ENCODE measurements at regions of chr11 and their contacts with region 1.

Region 1: GRCh38 chr11:31958076-31958735 is 132.7 kb upstream of the RCN1 start:
- H3K4me3 ChIP-seq: no peak overlapping the region
- H3K27ac ChIP-seq: no peak overlapping the region
- H3K4me1 ChIP-seq: no peaks in the 10 kb centered on the region
- CTCF ChIP-seq: no peak

Region 2: GRCh38 chr11:31107062-31107461 is 851.1 kb before region 1 on chr11:
- CTCF ChIA-PET with region 1: interaction called, 20 read pairs
- POLR2A ChIA-PET with region 1: no interaction called
- H3K4me3 ChIP-seq: no peak overlapping the region
- H3K27ac ChIP-seq: no peak overlapping the region
- H3K4me1 ChIP-seq: no peaks in the 10 kb centered on the region
- CTCF ChIP-seq: peak; percentile 58; the same call in 1 of the 2 replicates

Region 3: GRCh38 chr11:31397239-31397834 is 560.9 kb before region 1 on chr11:
- CTCF ChIA-PET with region 1: interaction called, 19 read pairs
- POLR2A ChIA-PET with region 1: no interaction called
- H3K4me3 ChIP-seq: no peak overlapping the region
- H3K27ac ChIP-seq: no peak overlapping the region
- H3K4me1 ChIP-seq: no peaks in the 10 kb centered on the region
- CTCF ChIP-seq: peak; percentile 32; the same call in 1 of the 2 replicates

Region 4: GRCh38 chr11:31664129-31664528 is 294.1 kb before region 1 on chr11:
- CTCF ChIA-PET with region 1: no interaction called
- POLR2A ChIA-PET with region 1: no interaction called
- H3K4me3 ChIP-seq: no peak overlapping the region
- H3K27ac ChIP-seq: no peak overlapping the region
- H3K4me1 ChIP-seq: no peaks in the 10 kb centered on the region
- CTCF ChIP-seq: no peak

Region 5: DNA sequence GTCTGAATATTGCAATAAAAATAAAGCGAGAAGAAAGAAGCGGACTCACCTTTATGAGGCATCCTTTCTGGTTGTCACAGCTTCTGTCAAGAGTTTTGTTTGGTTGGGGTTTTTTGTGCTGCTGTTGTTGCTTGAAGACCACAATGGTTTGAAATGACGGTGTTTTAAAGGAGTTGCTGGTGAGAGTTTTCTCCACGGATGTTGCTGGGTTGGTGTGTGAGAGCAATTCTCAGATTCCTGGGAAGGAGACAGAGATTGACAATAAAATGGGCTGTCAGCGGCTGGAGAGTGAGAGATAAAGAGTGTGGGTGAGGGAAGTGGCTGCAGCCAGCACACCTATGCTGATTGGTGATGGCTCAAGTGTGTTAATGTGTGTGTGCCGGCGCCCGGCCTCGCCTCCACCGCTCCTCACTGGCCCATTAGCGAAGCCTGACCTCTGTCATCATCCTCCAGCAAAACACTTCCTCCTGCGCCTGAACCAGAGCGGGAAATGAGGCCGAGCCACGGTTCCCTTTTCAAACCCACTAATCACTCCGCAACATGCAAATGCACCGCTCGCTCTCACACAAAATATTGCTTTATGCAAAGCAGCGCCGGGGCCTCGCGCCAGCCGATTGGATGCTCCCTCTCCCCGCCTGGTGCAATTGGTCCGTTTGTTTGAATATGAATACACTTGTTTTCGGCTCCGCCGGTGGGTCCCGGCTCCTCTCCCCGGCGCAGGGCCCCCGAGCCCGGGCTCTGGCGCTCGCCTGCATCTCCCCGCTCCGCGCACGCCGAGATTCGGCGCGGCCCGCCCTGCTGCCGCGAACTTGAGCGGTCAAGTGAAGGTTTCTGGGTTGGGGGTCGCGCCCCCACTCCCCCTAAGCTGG is 147.2 kb before region 1 on chr11 and contains the start of gene PAX6:
- CTCF ChIA-PET with region 1: interaction called, 13 read pairs
- POLR2A ChIA-PET with region 1: no interaction called
- H3K4me3 ChIP-seq: peak within 1 kb of the TSS; percentile 84
- H3K27ac ChIP-seq: peak within 1 kb of the TSS; percentile 93
- H3K4me1 ChIP-seq: no peaks in the 10 kb centered on the region
- CTCF ChIP-seq: no peak

Region 6: DNA sequence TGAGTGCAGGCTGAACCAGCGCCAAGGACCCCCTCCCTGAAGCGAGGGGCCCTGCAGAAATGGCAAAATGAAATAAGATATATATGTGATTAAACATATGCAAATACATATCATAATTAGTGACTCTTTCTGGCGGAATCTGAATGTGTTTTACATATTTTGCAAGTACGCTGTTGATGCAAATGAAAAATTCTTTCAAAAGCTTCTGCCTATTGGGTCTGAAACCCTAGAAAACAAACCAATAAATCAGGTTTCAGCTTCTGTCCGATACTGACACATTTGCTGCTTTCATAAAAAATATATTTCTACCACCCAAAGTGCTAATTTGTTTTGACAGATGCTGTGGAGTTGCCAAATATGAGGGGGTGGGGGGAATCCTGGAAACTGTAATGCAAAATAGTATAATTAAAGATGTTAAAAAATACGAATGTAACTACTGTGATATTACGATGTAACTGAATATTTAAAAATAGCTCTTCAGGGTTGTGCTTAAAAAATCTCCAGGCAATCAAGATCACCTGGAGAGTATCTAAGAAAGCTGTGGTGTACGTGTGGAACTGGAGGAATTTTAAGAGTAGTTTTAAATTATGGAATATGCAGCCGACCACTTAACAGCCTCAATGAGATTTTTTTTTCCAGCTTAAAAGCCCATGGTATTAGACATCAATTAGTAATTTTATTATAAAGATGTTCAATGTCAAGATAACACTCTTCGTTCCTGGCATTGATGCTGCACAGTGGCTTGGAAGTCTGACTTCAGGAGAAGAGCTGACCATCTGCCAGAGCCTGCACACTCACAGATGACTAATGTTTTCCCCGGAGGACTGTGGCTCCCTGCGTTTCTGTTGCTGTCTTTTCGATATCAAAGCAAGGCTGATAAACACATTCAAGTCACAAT is 10.5 kb after region 1 on chr11:
- CTCF ChIA-PET with region 1: interaction called, 16 read pairs
- POLR2A ChIA-PET with region 1: no interaction called
- H3K4me3 ChIP-seq: no peak overlapping the region
- H3K27ac ChIP-seq: no peak overlapping the region
- H3K4me1 ChIP-seq: no peaks in the 10 kb centered on the region
- CTCF ChIP-seq: no peak

Region 7: GRCh38 chr11:31986201-31986881 is 28.1 kb after region 1 on chr11:
- CTCF ChIA-PET with region 1: interaction called, 18 read pairs
- POLR2A ChIA-PET with region 1: no interaction called
- H3K4me3 ChIP-seq: no peak overlapping the region
- H3K27ac ChIP-seq: no peak overlapping the region
- H3K4me1 ChIP-seq: no peaks in the 10 kb centered on the region
- CTCF ChIP-seq: no peak

Region 8: GRCh38 chr11:32006799-32007388 is 48.7 kb after region 1 on chr11:
- CTCF ChIA-PET with region 1: interaction called, 13 read pairs
- POLR2A ChIA-PET with region 1: no interaction called
- H3K4me3 ChIP-seq: no peak overlapping the region
- H3K27ac ChIP-seq: no peak overlapping the region
- H3K4me1 ChIP-seq: no peaks in the 10 kb centered on the region
- CTCF ChIP-seq: no peak